PC-9 (cell line): ENCODE measurements at regions of chr11 and their contacts with region 1.

Region 1: DNA sequence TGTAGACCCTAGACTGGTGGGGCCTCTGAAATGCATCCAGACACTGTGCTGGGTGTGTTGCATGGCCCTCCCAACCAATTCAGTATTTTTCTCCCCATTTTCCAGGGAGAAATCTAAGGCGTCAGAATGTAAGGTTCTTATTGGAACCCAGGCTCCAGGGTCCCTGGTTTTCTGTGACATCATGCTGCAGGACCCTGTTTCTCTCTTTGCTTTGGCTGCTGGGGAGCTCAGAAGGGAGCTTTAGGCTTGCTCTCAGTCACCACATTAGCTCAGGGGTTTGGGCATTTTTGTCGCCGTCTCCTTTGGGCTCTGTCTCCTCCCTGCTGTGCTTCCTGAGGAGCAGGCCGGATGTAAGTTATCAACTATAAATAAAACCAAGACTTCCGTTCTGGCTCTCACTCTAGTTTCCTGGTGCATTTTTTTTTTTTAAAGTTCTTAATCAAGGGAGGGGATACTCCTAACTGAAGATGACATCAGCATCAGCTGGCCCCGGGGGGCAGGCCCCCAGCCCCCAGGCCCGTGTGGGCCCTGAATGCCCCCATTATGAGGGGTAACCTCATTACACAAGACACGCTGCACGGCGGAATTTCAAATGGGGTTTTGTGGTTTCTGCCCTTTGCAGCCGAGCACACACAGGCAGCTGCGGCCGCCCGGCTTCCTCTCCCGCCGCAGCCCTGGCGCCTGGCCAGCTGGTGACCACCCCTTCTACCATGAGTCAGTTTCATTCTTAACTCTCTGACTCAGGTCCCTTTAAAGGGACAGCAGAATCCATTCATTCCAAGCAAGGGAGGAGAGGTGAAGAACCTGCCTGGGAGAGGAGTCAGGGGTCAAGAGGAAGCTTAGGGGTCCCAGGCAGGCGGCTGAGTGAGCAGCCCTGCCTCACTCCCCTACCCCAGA is 3.2 kb downstream of the MYEOV start:
- DNase-seq: peak; percentile 99
- H3K4me3 ChIP-seq: peak overlapping the region; percentile 97
- H3K27ac ChIP-seq: peak overlapping the region; percentile 98
- H3K4me1 ChIP-seq: peaks cover 55% of the 10 kb centered on the region
- H3K27me3 ChIP-seq: no peaks in the 10 kb centered on the region
- CTCF ChIP-seq: no peak

Region 2: DNA sequence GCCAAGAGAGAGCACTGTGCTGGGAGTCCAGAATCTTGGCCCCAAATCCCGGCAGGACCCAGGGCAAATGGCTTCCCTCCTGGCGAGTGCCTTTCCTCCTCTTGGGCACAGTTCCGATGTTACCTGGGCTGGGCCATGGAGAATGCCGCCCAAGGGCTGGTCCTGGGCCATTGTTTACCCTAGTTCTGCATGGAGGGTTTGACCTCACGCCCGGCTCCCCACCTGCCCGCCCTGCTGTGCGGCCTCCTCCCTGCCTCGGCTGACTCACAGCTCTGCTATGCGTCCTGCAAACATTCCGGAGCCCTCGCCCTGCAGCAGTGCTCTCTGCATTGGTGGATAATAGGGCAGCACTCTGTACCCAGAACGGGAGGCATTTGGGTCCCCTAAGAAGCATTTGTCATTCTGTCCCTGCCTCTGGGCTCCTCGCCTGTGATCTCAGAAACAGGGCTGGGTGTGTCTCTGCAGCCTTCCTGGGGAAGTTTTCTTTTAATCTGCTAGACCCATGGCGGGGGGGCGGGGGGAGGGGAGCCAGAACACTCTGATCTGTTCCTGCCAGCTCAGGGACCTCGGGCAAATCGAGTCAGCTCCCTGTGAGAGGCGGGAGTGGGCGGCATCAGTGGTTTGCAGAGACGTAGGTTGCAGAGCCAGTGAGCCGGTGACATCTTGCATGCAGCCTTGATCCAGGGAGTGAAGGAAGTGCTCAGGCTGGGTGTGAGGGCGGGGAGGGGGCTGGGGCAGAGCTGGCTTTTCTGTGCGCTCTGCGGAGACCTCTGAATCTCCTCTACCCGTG is 174.3 kb before region 1 on chr11:
- CTCF ChIA-PET with region 1: interaction called, 4 read pairs
- POLR2A ChIA-PET with region 1: interaction called, 21 read pairs
- intact Hi-C with region 1: loop called (anchors 1 kb)
- DNase-seq: peak; percentile 99 to 100
- H3K4me3 ChIP-seq: peak overlapping the region; percentile 43; the same call in 1 of the 2 replicates
- H3K27ac ChIP-seq: peak overlapping the region; percentile 96
- H3K4me1 ChIP-seq: peaks cover 42% of the 10 kb centered on the region
- H3K27me3 ChIP-seq: no peaks in the 10 kb centered on the region
- CTCF ChIP-seq: no peak

Region 3: GRCh38 chr11:69148806-69149205 is 148.3 kb before region 1 on chr11:
- CTCF ChIA-PET with region 1: no interaction called
- POLR2A ChIA-PET with region 1: no interaction called
- intact Hi-C with region 1: no loop called
- DNase-seq: no peak
- H3K4me3 ChIP-seq: no peak overlapping the region
- H3K27ac ChIP-seq: no peak overlapping the region
- H3K4me1 ChIP-seq: no peaks in the 10 kb centered on the region
- H3K27me3 ChIP-seq: no peaks in the 10 kb centered on the region
- CTCF ChIP-seq: no peak

Region 4: DNA sequence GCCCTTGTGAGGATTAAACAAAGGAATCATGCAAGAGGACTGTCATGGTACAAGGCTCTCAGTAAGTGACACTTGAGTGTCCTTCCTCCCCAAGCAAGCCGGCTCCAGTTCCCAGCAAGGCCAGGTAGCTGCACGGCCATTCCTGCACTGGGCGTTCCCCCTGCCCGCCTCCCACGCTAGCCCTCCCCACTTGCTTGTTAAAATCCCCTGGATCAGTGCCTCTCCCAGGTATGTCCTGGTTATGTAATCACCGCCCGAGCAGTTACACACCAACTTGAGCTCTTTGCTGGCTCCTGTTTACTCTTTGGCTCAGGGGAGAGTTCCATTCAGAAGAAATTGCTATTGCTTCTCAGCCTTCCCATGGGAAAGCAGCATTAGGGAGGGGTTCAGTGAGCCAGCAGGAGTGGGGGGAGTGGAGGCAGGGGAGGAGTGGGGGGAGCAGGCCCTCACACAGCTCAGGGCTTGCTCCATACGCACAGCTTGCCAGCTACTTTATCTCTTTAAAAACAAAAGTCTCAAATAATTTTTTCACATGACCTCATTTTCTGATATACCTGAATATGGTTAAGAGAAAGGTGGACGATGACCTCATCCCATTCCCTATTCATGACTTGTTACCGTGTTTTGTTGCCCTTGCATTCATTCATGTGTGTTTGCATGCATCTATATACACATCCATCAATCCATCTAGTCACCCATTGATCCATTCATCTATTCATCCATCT is 22.4 kb before region 1 on chr11:
- CTCF ChIA-PET with region 1: interaction called, 3 read pairs
- POLR2A ChIA-PET with region 1: interaction called, 17 read pairs
- intact Hi-C with region 1: loop called (anchors 1 kb)
- DNase-seq: peak; percentile 95 to 99
- H3K4me3 ChIP-seq: no peak overlapping the region
- H3K27ac ChIP-seq: peak overlapping the region; percentile 90
- H3K4me1 ChIP-seq: peaks cover 65% of the 10 kb centered on the region
- H3K27me3 ChIP-seq: no peaks in the 10 kb centered on the region
- CTCF ChIP-seq: no peak

Region 5: GRCh38 chr11:69337211-69337721 is 40.1 kb after region 1 on chr11:
- CTCF ChIA-PET with region 1: interaction called, 3 read pairs
- POLR2A ChIA-PET with region 1: interaction called, 21 read pairs
- intact Hi-C with region 1: loop called (anchors 2 kb)
- DNase-seq: peak in 1 of 2 experiments; percentile 36
- H3K4me3 ChIP-seq: no peak overlapping the region
- H3K27ac ChIP-seq: peak overlapping the region; percentile 24
- H3K4me1 ChIP-seq: peaks cover 54% of the 10 kb centered on the region
- H3K27me3 ChIP-seq: no peaks in the 10 kb centered on the region
- CTCF ChIP-seq: no peak

Region 6: DNA sequence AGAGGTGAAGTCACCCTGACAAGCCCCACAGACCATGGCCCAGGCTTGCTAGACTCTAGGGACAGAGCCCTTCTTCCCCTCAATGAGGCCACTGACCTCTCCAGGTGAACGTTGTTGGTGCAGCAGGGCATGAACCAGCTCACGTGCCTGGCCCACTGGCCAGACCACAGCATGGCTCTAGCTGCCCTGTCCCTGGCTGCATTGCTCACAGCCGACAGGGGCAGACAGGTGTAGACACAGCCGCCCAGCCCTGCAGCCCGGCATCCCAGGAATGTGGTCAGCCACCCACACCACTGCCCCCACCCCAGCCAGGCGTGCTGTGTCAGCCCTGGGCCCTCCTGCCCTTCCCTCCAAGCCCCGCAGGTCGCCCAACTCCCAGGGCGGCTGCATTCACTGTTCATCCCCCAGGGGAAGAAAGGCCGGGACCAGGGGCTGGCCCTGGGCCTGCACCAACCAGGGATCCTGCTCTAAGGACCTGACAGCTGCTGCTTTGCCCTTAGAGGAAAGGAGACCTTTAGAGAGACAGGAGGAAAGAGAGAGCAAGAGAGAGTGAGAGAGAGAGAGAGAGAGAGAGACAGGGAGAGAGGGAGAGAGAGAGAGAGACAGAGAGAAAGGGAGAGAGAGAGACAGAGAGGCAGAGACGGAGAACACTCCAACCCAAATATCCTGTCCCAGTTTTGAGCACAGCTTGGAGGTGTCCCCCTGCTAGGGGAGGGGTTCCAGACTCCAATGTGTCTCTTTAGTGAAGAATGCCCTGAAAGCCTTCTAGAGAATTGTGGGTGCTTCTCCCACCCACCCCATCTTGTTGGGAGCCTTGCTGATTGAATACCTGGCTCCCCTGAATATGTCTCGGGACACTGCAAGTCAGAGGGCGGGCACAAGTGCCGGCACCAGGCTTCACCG is 140.1 kb after region 1 on chr11:
- CTCF ChIA-PET with region 1: interaction called, 6 read pairs
- POLR2A ChIA-PET with region 1: interaction called, 8 read pairs
- intact Hi-C with region 1: loop called (anchors 1 kb)
- DNase-seq: peak; percentile 97 to 100
- H3K4me3 ChIP-seq: no peak overlapping the region
- H3K27ac ChIP-seq: peak overlapping the region; percentile 75
- H3K4me1 ChIP-seq: peaks cover 64% of the 10 kb centered on the region
- H3K27me3 ChIP-seq: no peaks in the 10 kb centered on the region
- CTCF ChIP-seq: peak; percentile 70

Region 7: DNA sequence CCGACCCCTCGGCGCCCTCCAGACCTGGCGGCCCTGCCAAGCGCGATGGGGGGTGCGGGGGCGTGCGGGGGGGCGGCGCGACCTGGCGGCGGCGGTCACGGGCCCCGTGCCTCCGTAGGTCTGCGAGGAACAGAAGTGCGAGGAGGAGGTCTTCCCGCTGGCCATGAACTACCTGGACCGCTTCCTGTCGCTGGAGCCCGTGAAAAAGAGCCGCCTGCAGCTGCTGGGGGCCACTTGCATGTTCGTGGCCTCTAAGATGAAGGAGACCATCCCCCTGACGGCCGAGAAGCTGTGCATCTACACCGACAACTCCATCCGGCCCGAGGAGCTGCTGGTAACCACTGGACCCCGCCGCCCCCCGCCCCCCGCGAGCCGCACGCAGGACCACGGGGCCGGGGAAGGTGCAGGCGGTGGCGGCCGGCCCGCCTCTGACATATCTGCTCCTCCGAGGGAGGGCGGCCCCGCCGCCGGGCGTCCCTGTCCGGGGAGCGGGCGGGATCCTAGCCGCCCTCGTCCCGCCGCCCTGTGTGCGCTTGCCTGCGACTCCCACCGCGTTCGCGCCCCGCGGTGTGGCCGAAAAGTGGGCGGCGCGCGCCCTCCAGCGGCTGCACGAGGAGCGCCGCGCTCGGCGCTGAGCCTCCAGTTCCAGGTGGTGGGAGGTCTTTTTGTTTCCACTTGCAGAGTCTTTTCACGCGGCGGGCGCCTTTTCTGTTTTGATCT is 345.9 kb after region 1 on chr11:
- CTCF ChIA-PET with region 1: interaction called, 5 read pairs
- POLR2A ChIA-PET with region 1: interaction called, 26 read pairs
- intact Hi-C with region 1: loop called (anchors 1 kb)
- DNase-seq: peak; percentile 66 to 83
- H3K4me3 ChIP-seq: peak overlapping the region; percentile 99
- H3K27ac ChIP-seq: peak overlapping the region; percentile 85
- H3K4me1 ChIP-seq: peaks cover 22% of the 10 kb centered on the region
- H3K27me3 ChIP-seq: no peaks in the 10 kb centered on the region
- CTCF ChIP-seq: peak; percentile 91